ENCODE measurements at regions of chr1 and their contacts with region 1.

Region 1: DNA sequence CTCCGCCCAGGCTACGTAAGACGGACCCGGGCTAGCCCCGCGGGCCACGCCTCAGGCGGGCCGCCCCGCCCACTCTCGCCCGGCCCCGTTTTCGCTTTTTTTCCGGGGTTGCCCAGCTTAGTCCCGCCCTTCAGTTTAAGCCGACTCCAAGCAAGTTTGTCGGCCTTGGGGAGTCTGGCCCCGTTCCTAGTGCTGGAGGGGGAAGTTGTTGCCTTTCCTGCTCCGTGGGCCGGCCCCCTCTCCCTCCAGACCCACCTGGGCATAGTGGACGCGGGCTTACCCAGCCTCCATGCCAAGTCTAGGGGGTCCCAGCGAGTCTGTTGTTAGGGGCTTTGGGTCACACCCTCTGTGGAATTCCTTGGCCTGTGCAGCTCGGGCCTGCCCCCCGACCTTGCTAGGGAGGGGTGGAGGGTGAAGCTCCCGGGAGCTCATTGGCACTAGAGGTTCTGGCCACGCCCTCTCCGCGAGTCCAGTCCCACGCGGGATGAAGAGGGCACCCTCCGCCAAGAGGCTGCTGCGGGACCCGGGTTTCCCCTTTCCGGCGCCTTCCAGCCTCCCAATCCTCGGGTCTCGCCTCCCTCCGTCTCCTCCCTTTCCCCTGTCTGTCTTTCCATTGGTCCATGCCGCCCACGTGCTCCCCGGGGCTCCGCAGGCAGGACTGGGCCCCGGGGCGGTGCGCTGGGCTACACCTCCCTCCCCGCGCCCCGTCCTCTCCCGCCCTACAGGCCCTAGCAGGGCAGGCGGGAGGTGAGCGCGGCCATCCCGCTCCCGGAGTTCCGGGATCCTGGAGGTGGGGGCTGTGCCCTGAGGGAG is 3.3 kb downstream of the RUSC1 start:
- DNase-seq: peak; percentile 98
- ATAC-seq: peak; percentile 90

Region 2: GRCh38 chr1:155273343-155274245 is 50.4 kb before region 1 on chr1 and contains the start of gene CLK2:
- intact Hi-C with region 1: loop called (anchors 5 kb)
- DNase-seq: peak; percentile 98
- ATAC-seq: peak; percentile 95
- total RNA-seq, gene CLK2: 57.8 TPM

Region 3: DNA sequence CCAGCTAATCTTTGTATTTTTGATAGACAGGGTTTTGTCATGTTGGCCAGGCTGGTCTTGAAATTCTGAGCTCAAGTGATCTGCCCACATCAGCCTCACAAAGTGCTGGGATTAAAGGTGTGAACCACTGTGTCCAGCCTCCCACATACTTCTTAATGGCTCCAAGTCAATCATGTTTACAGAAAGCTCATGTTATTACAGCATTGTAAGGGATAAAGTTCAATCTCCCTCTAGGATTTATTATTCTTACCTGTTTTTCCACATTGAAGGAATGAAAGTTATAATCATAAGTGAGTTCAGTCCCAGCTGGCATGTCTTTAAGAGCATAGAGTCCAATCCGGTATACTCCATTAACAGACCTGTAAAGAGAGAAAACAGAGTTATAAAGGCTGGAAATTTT is 36.0 kb after region 1 on chr1:
- intact Hi-C with region 1: loop called (anchors 1 kb)
- DNase-seq: no peak
- ATAC-seq: no peak

Region 4: DNA sequence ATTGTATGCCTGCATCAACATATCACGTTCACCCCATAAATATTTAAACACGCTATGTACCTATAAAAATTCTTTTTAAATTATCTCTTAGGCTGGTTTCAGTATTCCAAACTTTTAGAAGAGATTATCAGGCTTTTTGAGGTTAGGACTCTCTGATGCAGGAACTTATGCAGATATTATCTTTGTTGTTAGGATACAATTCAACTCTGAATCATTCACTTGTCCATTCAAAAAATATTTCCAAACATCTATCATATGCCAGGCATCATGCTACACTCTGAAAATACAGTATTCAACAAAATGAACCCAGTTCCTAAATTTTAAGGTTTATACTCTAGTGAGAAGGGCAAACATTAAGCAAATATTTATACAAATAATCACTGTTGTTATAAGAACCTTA is 198.1 kb after region 1 on chr1:
- intact Hi-C with region 1: no loop called
- DNase-seq: no peak
- ATAC-seq: no peak